CD4-positive, alpha-beta memory T cell (primary cell): ENCODE measurements at regions of chr1 and their contacts with region 1.

Region 1: GRCh38 chr1:160428655-160429054 is 28.3 kb downstream of the VANGL2 start:
- DNase-seq: peak in 3 of 5 donors; percentile 41 to 47 (median 41)
- H3K4me3 ChIP-seq: peak overlapping the region in 1 of 2 donors; percentile 11
- H3K4me3 Mint-ChIP-seq: peak overlapping the region; percentile 10 to 74 (median 60)
- H3K27ac ChIP-seq: peak overlapping the region; percentile 57
- H3K27ac Mint-ChIP-seq: peak overlapping the region; percentile 76 to 96 (median 92)
- H3K4me1 ChIP-seq: peaks cover 68% of the 10 kb centered on the region
- H3K4me1 Mint-ChIP-seq: peaks cover 49 to 63% (median 57%) of the 10 kb centered on the region in 4 donors
- H3K27me3 ChIP-seq: no peaks in the 10 kb centered on the region
- H3K27me3 Mint-ChIP-seq: no peaks in the 10 kb centered on the region

Region 2: DNA sequence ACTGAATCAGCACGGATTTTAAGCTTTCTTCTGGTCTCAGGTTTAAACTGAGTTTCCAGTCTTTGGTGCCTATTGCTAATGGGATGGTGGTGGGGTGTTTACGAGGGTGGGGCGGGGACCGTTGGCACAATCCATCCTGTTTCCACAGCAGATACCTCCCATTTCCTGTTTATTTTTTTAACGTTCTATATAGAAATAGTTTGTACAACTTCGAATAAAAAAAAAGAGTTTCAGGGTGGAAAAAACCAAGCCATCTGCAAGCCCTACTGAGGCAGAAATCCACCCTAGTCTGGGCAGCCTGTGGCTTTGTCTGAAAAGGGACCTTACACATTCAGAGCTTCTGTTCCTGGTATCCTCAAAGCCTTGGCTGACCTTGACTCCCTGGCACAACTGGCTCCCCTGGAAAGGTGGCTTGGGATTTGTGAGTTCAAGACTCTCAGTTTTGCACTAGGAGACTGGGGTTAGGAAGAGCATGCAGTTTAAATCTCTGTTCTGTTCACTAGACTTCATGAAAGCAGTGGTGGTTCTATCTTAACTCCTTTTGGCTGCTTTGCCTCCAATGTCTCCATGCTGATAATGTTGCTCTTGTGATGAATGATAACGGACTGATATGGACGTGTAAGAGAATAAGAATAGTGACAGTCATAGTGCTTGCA is 18.4 kb after region 1 on chr1:
- CTCF ChIA-PET with region 1: interaction called, 13 read pairs
- POLR2A ChIA-PET with region 1: interaction called, 35 read pairs
- intact Hi-C with region 1: no loop called
- DNase-seq: no peak
- H3K4me3 ChIP-seq: no peak overlapping the region
- H3K4me3 Mint-ChIP-seq: peak overlapping the region; percentile 6 to 70 (median 53)
- H3K27ac ChIP-seq: peak overlapping the region; percentile 11
- H3K27ac Mint-ChIP-seq: peak overlapping the region; percentile 11 to 88 (median 72)
- H3K4me1 ChIP-seq: peaks cover 78% of the 10 kb centered on the region
- H3K4me1 Mint-ChIP-seq: peaks cover 60 to 81% (median 69%) of the 10 kb centered on the region in 4 donors
- H3K27me3 ChIP-seq: no peaks in the 10 kb centered on the region
- H3K27me3 Mint-ChIP-seq: no peaks in the 10 kb centered on the region

Region 3: GRCh38 chr1:160489513-160490261 is 61.0 kb after region 1 on chr1:
- CTCF ChIA-PET with region 1: interaction called, 14 read pairs
- POLR2A ChIA-PET with region 1: interaction called, 10 read pairs
- intact Hi-C with region 1: loop called (anchors 2 kb)
- DNase-seq: no peak
- H3K4me3 ChIP-seq: no peak overlapping the region
- H3K4me3 Mint-ChIP-seq: no peak overlapping the region
- H3K27ac ChIP-seq: no peak overlapping the region
- H3K27ac Mint-ChIP-seq: peak overlapping the region in 6 of 7 donors; percentile 47 to 86 (median 74)
- H3K4me1 ChIP-seq: peaks cover 7% of the 10 kb centered on the region
- H3K4me1 Mint-ChIP-seq: peaks cover 7 to 19% (median 13%) of the 10 kb centered on the region in 4 donors
- H3K27me3 ChIP-seq: no peaks in the 10 kb centered on the region
- H3K27me3 Mint-ChIP-seq: no peaks in the 10 kb centered on the region

Region 4: DNA sequence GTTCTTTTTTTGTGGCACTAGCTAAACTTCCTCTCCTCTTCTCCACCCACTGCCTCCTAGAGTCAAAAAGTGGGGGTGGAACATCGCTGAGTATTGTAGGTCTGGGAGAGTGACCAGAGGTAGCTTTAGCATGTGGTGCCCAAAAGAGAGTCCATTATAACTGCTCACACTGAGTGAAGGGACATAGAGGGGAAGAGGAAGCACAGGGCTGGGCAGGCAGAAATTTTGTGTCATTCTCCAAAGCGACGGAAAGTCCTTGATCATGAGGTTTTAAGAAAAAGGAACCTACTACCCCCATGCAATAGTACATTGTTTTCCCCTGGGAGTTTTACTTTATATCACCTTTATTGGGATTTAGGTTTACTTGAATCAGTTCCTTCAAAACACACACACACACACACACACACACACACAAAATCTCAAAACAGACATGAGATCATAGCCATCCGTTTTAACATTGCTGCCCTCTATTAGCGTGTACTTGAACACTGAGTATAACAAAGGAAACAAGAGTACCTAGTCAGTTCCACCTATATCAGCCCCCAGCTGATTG is 146.5 kb after region 1 on chr1:
- CTCF ChIA-PET with region 1: interaction called, 9 read pairs
- POLR2A ChIA-PET with region 1: interaction called, 10 read pairs
- intact Hi-C with region 1: no loop called
- DNase-seq: peak in 2 of 5 donors; percentile 26 to 49
- H3K4me3 ChIP-seq: peak overlapping the region; percentile 15 to 80
- H3K4me3 Mint-ChIP-seq: peak overlapping the region; percentile 83 to 98 (median 94)
- H3K27ac ChIP-seq: peak overlapping the region; percentile 68
- H3K27ac Mint-ChIP-seq: peak overlapping the region; percentile 89 to 95 (median 92)
- H3K4me1 ChIP-seq: peaks cover 83% of the 10 kb centered on the region
- H3K4me1 Mint-ChIP-seq: peaks cover 64 to 94% (median 73%) of the 10 kb centered on the region in 4 donors
- H3K27me3 ChIP-seq: no peaks in the 10 kb centered on the region
- H3K27me3 Mint-ChIP-seq: no peaks in the 10 kb centered on the region

Region 5: GRCh38 chr1:160612613-160613218 is 184.1 kb after region 1 on chr1:
- CTCF ChIA-PET with region 1: interaction called, 115 read pairs
- POLR2A ChIA-PET with region 1: interaction called, 53 read pairs
- intact Hi-C with region 1: loop called (anchors 1 kb)
- DNase-seq: no peak
- H3K4me3 ChIP-seq: no peak overlapping the region
- H3K4me3 Mint-ChIP-seq: no peak overlapping the region
- H3K27ac ChIP-seq: peak overlapping the region; percentile 22
- H3K27ac Mint-ChIP-seq: peak overlapping the region; percentile 35 to 88 (median 61)
- H3K4me1 ChIP-seq: peaks cover 69% of the 10 kb centered on the region
- H3K4me1 Mint-ChIP-seq: peaks cover 31 to 80% (median 58%) of the 10 kb centered on the region in 4 donors
- H3K27me3 ChIP-seq: no peaks in the 10 kb centered on the region
- H3K27me3 Mint-ChIP-seq: no peaks in the 10 kb centered on the region